Caco-2 (cell line): ENCODE measurements at regions of chr2 and their contacts with region 1.

Region 1: GRCh38 chr2:112121682-112122254 is 16.4 kb upstream of the FBLN7 start:
- DNase-seq: peak in 1 of 2 experiments; percentile 53
- H3K4me3 ChIP-seq: no peak overlapping the region
- H3K4me3 Mint-ChIP-seq: no peak overlapping the region
- H3K27ac Mint-ChIP-seq: no peak overlapping the region
- H3K4me1 ChIP-seq: no peaks in the 10 kb centered on the region
- H3K4me1 Mint-ChIP-seq: no peaks in the 10 kb centered on the region
- H3K27me3 ChIP-seq: no peaks in the 10 kb centered on the region
- H3K27me3 Mint-ChIP-seq: no peaks in the 10 kb centered on the region
- CTCF ChIP-seq: peak; percentile 51 to 59

Region 2: GRCh38 chr2:112216166-112216565 is 94.4 kb after region 1 on chr2:
- CTCF ChIA-PET with region 1: interaction called, 8 read pairs
- POLR2A ChIA-PET with region 1: no interaction called
- intact Hi-C with region 1: loop called (anchors 5 kb)
- DNase-seq: peak; percentile 42 to 51
- H3K4me3 ChIP-seq: no peak overlapping the region
- H3K4me3 Mint-ChIP-seq: no peak overlapping the region
- H3K27ac Mint-ChIP-seq: no peak overlapping the region
- H3K4me1 ChIP-seq: no peaks in the 10 kb centered on the region
- H3K4me1 Mint-ChIP-seq: no peaks in the 10 kb centered on the region
- H3K27me3 ChIP-seq: no peaks in the 10 kb centered on the region
- H3K27me3 Mint-ChIP-seq: no peaks in the 10 kb centered on the region
- CTCF ChIP-seq: peak; percentile 29 to 65

Region 3: DNA sequence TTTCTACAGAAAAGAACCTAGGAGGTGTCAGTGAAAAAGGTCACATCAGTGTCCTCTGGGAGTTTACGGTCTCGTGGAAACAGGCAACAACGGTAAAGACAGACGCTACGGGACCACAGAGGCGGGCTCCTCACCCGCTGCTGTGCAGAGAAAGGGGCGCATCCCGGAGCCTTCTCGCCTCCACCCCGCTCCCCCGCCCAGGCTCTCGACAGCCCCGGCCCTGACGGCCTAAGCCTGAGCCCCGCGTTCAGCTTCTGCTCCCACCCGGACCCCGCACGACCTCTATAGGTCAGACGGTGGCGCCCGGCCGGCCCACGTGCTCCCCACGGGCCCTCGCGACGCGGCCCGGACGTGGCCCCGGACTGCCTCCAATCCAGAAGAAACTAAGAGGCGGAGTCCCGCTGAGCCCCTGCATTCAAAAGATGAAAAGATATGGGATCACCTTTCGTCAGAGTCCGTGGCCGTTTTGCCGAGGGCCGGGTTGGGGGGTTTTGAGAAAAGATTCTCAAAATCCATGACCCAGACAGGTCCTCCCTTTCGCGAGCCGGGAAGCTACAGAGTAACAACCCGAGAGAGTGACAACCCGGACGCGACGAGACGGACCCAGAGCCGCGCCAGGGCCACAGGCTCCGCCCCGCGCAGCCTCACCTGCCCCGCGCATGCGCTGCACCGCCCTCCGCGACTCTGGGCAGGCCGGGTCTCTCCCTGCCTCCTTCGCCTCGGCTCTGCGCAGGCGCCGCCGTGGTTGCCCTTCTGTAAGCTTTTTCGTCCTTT is 132.9 kb after region 1 on chr2 and contains the start of gene ZC3H8:
- CTCF ChIA-PET with region 1: no interaction called
- POLR2A ChIA-PET with region 1: no interaction called
- intact Hi-C with region 1: loop called (anchors 5 kb)
- DNase-seq: peak; percentile 94 to 97
- H3K4me3 ChIP-seq: peak within 1 kb of the TSS; percentile 91
- H3K4me3 Mint-ChIP-seq: peak within 1 kb of the TSS; percentile 78
- H3K27ac Mint-ChIP-seq: peak within 1 kb of the TSS; percentile 63
- H3K4me1 ChIP-seq: peaks cover 10% of the 10 kb centered on the region; the same call in 1 of the 2 replicates
- H3K4me1 Mint-ChIP-seq: peaks cover 4% of the 10 kb centered on the region
- H3K27me3 ChIP-seq: no peaks in the 10 kb centered on the region
- H3K27me3 Mint-ChIP-seq: no peaks in the 10 kb centered on the region
- CTCF ChIP-seq: no peak
- total RNA-seq, gene ZC3H8: 17.6 and 19.9 TPM in 2 replicates

Region 4: GRCh38 chr2:112433932-112434730 is 312.4 kb after region 1 on chr2:
- CTCF ChIA-PET with region 1: interaction called, 10 read pairs
- POLR2A ChIA-PET with region 1: no interaction called
- intact Hi-C with region 1: no loop called
- DNase-seq: no peak
- H3K4me3 ChIP-seq: no peak overlapping the region
- H3K4me3 Mint-ChIP-seq: peak overlapping the region; percentile 63
- H3K27ac Mint-ChIP-seq: no peak overlapping the region
- H3K4me1 ChIP-seq: no peaks in the 10 kb centered on the region
- H3K4me1 Mint-ChIP-seq: peaks cover 6% of the 10 kb centered on the region
- H3K27me3 ChIP-seq: no peaks in the 10 kb centered on the region
- H3K27me3 Mint-ChIP-seq: no peaks in the 10 kb centered on the region
- CTCF ChIP-seq: no peak

Region 5: GRCh38 chr2:112579241-112579640 is 457.5 kb after region 1 on chr2:
- CTCF ChIA-PET with region 1: no interaction called
- POLR2A ChIA-PET with region 1: no interaction called
- intact Hi-C with region 1: loop called (anchors 5 kb)
- DNase-seq: no peak
- H3K4me3 ChIP-seq: no peak overlapping the region
- H3K4me3 Mint-ChIP-seq: no peak overlapping the region
- H3K27ac Mint-ChIP-seq: no peak overlapping the region
- H3K4me1 ChIP-seq: peaks cover 5% of the 10 kb centered on the region
- H3K4me1 Mint-ChIP-seq: no peaks in the 10 kb centered on the region
- H3K27me3 ChIP-seq: no peaks in the 10 kb centered on the region
- H3K27me3 Mint-ChIP-seq: no peaks in the 10 kb centered on the region
- CTCF ChIP-seq: no peak